ENCODE measurements at regions of chr16 and their contacts with region 1.

Region 1: DNA sequence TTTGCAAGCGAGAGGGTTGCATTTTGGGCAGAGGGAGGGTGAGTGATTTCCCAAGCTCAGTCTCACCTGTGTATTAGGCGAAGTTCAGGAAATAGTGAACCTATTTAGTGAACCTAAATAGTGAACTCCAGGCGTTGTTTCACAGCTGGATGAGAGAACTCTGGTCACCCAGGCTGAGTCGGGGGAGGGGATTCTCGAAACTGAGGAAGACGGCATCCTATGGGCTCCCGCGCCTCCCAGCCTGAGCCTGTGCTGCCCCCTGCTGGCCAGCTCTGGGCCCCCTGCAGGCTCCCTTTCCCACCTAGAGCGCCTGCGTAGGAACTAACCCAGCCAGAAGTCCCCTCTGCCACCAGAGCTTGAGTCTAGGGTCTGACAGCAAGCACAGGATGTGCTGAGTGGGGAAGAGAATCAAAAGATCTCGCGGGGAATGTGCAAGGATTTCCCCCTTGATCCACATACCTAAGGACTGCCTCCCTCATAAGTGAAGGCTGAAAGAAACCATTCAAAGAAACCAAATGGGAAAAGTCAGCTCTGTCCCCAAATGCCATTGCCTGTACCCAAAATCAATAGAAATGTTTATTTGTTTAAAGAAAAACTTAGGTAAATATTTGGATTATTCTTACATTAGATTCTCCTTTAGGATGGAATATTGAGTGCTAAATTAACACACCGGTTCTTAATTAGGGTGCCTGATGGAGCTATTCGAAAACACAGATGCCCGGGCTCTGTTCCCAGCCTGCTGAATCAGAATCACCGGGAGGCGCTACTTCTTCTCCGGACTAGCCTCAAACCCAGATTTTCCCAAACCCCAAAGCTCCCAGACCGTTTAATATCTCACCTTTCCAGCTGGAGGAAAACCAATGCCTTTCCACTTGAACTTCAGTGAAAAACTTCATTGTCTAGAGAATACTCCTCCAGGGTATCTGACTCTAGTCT is 14.8 kb upstream of the MARVELD3 start:
- DNase-seq: peak in 1 of 2 experiments; percentile 70
- H3K4me3 ChIP-seq: no peak overlapping the region
- H3K27ac ChIP-seq: no peak overlapping the region
- H3K4me1 ChIP-seq: peaks cover 19% of the 10 kb centered on the region
- H3K27me3 ChIP-seq: no peaks in the 10 kb centered on the region
- CTCF ChIP-seq: peak; percentile 82

Region 2: DNA sequence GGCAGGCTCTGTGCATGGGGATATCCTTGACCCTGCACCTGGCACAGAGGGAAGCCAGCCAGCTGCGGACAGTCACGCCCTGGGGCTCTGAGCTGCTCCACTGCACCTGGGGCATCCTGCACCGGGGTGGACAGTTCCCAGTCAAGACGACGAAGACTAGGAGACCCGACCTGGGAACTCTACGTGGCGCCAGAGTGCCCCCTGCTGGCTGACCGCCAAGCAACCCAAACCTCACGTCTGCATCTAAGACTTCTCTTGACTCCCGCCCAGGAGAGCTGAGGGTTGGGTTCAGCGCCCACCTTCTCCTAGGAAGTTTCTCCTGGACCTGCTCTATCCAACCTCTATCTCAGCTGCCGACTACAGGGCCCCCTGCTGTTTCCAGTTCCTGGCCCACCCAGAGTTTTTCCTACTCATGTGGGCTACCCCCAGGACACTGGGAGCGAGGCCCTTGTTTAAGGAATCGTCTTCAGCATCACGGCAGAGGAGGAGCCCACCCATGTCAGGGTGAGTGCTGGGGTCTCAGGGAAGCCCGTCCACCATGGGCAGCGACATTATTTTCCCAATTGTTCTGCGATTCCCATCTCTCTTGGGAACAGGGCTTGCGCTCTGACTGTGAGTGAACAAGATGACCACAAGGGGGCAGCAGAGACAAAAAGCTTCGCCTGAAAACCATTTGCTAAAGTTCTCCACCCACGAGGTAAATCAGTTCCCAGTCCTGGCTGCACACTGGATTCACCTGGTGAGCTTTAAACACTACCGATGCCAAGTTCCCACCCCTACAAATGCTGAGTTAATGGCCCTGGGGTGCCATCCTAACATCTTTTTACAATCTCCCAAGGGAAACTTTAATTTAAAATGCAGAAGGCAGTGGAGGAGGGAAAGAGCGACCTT is 198.7 kb before region 1 on chr16:
- CTCF ChIA-PET with region 1: interaction called, 10 read pairs
- POLR2A ChIA-PET with region 1: no interaction called
- intact Hi-C with region 1: loop called (anchors 2 kb)
- DNase-seq: peak; percentile 64 to 79
- H3K4me3 ChIP-seq: peak overlapping the region; percentile 20; the same call in 1 of the 2 replicates
- H3K27ac ChIP-seq: no peak overlapping the region
- H3K4me1 ChIP-seq: 0 out of 2 replicates have a peak, but pooled peaks cover 3% of the 10 kb centered on the region
- H3K27me3 ChIP-seq: peaks cover 20% of the 10 kb centered on the region; the same call in 1 of the 2 replicates
- CTCF ChIP-seq: peak; percentile 90

Region 3: DNA sequence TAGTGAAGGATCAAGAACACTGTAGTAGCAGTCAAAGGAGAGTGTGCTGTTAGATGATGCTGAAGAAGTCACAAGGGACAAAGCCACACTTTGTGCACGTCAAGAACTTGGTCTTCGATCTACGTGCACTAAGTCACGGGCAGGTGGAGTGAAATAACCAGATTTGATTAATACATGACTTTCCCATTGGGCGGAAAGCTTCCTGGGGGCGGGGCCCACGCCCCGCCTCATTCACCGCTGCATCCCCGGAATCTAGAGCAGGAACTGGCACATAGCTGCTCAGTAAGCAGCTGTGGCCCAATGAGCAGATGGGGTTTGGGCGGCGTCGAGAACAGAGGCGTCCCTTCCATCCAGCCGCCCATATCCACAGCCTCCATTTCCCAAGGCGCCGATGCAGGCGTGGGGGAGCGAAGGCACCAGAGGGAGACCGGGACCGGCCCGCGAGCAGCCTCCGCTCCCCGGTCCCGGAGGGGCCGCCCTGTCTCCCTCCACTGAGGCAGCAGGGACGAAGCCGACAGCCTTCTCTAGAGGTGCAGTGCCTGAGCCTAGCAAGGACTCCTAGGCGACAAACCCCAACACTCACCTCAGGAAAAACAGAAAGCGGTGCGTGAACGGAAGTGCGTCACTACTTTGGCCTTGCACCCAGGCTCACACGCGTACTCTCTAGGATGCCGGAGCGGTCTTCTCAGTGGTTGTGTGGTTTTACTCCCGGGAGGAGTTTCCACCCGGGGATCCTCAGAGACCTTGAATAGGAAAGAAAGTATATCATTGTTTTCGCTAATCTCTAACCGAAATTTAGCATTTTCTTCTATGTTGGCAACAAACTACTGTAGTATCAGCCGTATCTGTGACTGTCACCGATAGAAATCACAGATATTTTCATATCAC is 127.0 kb before region 1 on chr16:
- CTCF ChIA-PET with region 1: interaction called, 5 read pairs
- POLR2A ChIA-PET with region 1: interaction called, 22 read pairs
- intact Hi-C with region 1: no loop called
- DNase-seq: peak; percentile 72 to 79
- H3K4me3 ChIP-seq: peak overlapping the region; percentile 97
- H3K27ac ChIP-seq: peak overlapping the region; percentile 82
- H3K4me1 ChIP-seq: peaks cover 15% of the 10 kb centered on the region
- H3K27me3 ChIP-seq: no peaks in the 10 kb centered on the region
- CTCF ChIP-seq: no peak

Region 4: DNA sequence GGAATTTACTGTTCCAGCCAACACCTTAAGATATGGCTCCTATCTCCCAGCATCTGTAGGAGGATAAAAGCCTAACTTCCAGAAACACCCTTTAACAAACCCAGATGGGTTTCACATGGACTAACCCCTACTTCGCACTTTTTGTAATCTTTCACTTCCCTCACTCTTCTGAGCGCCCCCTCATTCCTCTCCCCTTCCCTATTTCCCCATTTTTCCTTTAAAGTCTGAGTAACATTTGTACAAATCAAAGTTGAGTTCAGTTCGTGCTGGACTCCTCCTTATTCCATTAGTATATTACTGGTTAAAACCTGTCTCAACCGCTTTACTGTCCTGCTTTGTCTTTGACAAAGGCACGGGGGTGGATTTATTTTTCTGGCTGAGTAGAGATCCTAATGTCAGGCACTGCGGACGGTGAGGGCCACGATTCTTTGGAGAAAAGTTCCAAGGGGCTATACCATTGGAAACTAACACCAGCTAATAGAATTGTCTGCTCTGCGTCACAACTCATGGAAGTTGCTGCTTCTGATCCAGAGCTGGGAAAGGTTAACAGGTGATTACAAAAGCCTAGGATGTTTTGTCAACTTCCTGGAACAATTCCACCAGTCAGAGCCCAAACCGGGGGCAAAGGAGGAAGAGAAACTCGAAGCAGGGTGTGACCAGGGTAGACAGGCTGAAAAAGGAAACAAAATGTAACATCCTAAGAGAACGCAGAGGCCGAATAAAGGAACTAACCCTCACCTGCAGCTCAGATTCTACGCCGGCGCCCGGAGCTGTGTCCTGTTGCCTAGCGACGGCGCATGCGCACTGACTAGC is 46.8 kb before region 1 on chr16:
- CTCF ChIA-PET with region 1: interaction called, 22 read pairs
- POLR2A ChIA-PET with region 1: interaction called, 6 read pairs
- intact Hi-C with region 1: loop called (anchors 2 kb)
- DNase-seq: no peak
- H3K4me3 ChIP-seq: peak overlapping the region; percentile 73
- H3K27ac ChIP-seq: peak overlapping the region; percentile 69
- H3K4me1 ChIP-seq: peaks cover 17% of the 10 kb centered on the region
- H3K27me3 ChIP-seq: no peaks in the 10 kb centered on the region
- CTCF ChIP-seq: no peak

Region 5: GRCh38 chr16:71585318-71585703 is 25.9 kb before region 1 on chr16:
- CTCF ChIA-PET with region 1: no interaction called
- POLR2A ChIA-PET with region 1: no interaction called
- intact Hi-C with region 1: no loop called
- DNase-seq: no peak
- H3K4me3 ChIP-seq: no peak overlapping the region
- H3K27ac ChIP-seq: no peak overlapping the region
- H3K4me1 ChIP-seq: no peaks in the 10 kb centered on the region
- H3K27me3 ChIP-seq: peaks cover 27% of the 10 kb centered on the region; the same call in 1 of the 2 replicates
- CTCF ChIP-seq: no peak

Region 6: DNA sequence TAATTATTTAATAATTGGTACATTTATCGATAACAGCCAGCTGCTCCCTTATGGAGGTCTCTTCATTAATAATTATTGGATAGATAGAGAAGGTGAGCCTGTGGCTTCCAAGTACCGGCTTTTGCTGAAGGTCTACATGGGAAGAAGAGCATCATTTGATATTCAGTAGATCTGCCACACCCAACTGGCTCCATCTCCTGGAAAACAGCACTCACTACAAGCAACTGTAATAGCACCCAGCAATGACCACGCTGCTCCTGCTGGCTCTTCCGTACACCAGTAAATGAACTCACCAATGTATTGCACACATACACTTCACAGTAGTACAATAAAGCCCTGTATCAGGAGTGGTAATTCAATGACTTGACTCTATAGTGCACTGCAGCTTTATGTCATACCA is 34.2 kb after region 1 on chr16:
- CTCF ChIA-PET with region 1: interaction called, 3 read pairs
- POLR2A ChIA-PET with region 1: no interaction called
- intact Hi-C with region 1: loop called (anchors 1 kb)
- DNase-seq: no peak
- H3K4me3 ChIP-seq: no peak overlapping the region
- H3K27ac ChIP-seq: no peak overlapping the region
- H3K4me1 ChIP-seq: 0 out of 2 replicates have a peak, but pooled peaks cover 6% of the 10 kb centered on the region
- H3K27me3 ChIP-seq: no peaks in the 10 kb centered on the region
- CTCF ChIP-seq: peak; percentile 64

Region 7: DNA sequence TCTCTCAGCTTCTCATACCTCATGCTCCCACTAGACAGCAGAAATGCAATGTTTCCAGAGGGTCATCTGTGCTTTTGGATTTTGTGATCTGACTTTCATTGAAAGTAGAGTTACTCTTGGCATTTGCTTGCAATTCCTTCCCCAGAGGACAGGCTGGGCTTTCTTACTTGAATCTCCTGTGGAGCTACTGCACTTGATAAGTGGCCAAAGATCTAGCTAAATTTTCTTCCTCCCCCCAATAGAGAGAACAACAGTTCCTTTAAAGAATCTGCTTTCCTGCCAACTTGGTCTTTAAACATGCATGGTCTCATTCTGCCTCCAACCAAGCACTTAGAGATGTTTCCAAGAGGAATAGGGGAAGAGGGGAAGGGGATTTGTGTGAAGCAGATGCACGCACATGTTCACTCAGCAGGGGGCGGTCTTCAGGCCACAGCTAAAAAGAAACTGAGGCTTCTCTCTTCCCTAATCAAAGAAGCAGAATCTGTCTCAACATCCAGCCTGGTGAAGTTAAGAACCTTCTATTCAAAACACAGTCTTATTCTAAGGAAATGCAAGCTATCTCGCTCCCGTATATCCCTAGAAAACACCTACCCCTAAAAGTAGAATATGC is 1207.1 kb after region 1 on chr16:
- CTCF ChIA-PET with region 1: no interaction called
- POLR2A ChIA-PET with region 1: no interaction called
- intact Hi-C with region 1: no loop called
- DNase-seq: no peak
- H3K4me3 ChIP-seq: no peak overlapping the region
- H3K27ac ChIP-seq: no peak overlapping the region
- H3K4me1 ChIP-seq: no peaks in the 10 kb centered on the region
- H3K27me3 ChIP-seq: no peaks in the 10 kb centered on the region
- CTCF ChIP-seq: no peak; the same call in 1 of the 2 replicates